Activated CD4-positive, alpha-beta T cell treated with anti-CD3 and anti-CD28 coated beads, Interleukin-2, amount 10 ng/mL, durations not matched to agents 24 days and 14 days (primary cell): ENCODE measurements at regions of chr2 and their contacts with region 1.

Region 1: GRCh38 chr2:37832590-37833197 is 92.4 kb upstream of the RMDN2 start:
- DNase-seq: peak; percentile 94
- H3K4me3 Mint-ChIP-seq: no peak overlapping the region
- H3K27ac Mint-ChIP-seq: no peak overlapping the region
- H3K4me1 Mint-ChIP-seq: peaks cover 20% of the 10 kb centered on the region
- H3K27me3 Mint-ChIP-seq: no peaks in the 10 kb centered on the region

Region 2: GRCh38 chr2:37301408-37301807 is 531.3 kb before region 1 on chr2:
- intact Hi-C with region 1: no loop called
- DNase-seq: no peak
- H3K4me3 Mint-ChIP-seq: no peak overlapping the region
- H3K27ac Mint-ChIP-seq: no peak overlapping the region
- H3K4me1 Mint-ChIP-seq: peaks cover 1% of the 10 kb centered on the region
- H3K27me3 Mint-ChIP-seq: no peaks in the 10 kb centered on the region

Region 3: GRCh38 chr2:37414470-37414949 is 418.2 kb before region 1 on chr2:
- intact Hi-C with region 1: loop called (anchors 1 kb)
- DNase-seq: peak; percentile 63
- H3K4me3 Mint-ChIP-seq: no peak overlapping the region
- H3K27ac Mint-ChIP-seq: no peak overlapping the region
- H3K4me1 Mint-ChIP-seq: peaks cover 2% of the 10 kb centered on the region
- H3K27me3 Mint-ChIP-seq: peaks cover 33% of the 10 kb centered on the region

Region 4: DNA sequence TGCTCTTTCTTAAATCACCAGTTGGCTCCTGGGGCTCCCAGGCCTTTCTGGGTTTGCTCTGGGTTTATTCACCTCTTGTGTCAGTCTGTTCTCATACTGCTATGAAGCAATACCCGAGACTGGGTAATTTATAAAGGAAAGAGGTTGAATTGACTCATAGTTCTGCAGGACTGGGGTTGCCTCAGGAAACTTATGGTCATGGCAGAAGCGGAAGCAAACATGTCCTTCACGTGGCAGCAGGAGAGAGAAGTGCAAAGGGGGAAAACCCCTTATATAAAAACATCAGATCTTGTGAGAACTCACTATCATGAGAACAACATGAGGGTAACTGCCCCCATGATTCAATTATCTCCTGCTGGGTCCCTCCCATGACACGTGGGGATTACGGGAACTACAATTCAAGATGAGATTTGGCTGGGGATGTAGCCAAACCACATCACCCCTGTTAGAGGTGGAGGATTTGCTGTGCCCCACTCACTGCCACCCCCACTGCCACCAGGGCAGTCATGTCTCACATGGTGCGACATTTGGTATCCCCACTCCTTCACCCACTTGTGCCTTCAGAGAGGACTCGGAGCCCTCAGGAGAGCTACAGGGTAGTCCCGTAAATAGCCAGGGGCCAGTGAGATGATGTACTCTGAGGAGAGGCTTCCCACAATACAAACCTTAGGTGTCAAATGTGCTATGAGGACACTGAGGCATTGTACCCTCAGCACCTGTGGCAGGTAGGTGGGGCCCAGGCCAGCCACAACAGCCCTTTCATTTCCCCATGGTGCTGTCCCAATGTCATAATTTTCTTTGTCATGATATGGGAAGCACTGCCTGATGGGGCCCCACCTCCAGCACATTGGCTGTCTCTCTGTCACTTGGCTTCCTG is 197.0 kb before region 1 on chr2:
- intact Hi-C with region 1: loop called (anchors 5 kb)
- DNase-seq: peak; percentile 89
- H3K4me3 Mint-ChIP-seq: peak overlapping the region; percentile 46
- H3K27ac Mint-ChIP-seq: peak overlapping the region; percentile 83
- H3K4me1 Mint-ChIP-seq: peaks cover 31% of the 10 kb centered on the region
- H3K27me3 Mint-ChIP-seq: peaks cover 13% of the 10 kb centered on the region

Region 5: GRCh38 chr2:37871456-37872191 is 38.9 kb after region 1 on chr2:
- intact Hi-C with region 1: loop called (anchors 1 kb)
- DNase-seq: no peak
- H3K4me3 Mint-ChIP-seq: peak overlapping the region; percentile 69
- H3K27ac Mint-ChIP-seq: peak overlapping the region; percentile 94
- H3K4me1 Mint-ChIP-seq: peaks cover 45% of the 10 kb centered on the region
- H3K27me3 Mint-ChIP-seq: peaks cover 2% of the 10 kb centered on the region